Dorsolateral prefrontal cortex (tissue), 120 donors: ENCODE measurements at regions of chr2 and their contacts with region 1.

Region 1: DNA sequence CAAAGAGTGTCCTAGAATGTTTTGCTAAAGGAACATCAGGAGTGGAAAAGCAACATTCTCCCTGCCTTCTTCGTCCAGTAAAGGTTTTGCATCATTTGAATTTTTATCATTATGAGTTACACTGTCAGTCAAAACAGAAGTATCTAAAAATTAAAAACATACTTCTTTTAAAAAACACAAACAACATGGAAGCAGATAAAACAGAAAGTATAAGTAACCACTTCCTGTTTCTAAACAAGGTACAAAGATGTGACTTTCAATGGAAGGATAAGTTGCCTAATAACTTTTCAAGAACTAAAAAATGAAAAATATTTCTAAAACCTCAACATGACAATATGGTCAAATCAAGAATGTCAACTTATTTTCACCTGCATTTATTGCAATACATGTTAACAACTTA is 158.2 kb downstream of the STK39 start:
- DNase-seq: no peak
- H3K4me3 ChIP-seq: no peak overlapping the region
- H3K27ac ChIP-seq: peak overlapping the region in 6 of 59 donors; percentile 3 to 39 (median 22)
- H3K27me3 ChIP-seq: no peaks in the 10 kb centered on the region
- CTCF ChIP-seq: no peak

Region 2: DNA sequence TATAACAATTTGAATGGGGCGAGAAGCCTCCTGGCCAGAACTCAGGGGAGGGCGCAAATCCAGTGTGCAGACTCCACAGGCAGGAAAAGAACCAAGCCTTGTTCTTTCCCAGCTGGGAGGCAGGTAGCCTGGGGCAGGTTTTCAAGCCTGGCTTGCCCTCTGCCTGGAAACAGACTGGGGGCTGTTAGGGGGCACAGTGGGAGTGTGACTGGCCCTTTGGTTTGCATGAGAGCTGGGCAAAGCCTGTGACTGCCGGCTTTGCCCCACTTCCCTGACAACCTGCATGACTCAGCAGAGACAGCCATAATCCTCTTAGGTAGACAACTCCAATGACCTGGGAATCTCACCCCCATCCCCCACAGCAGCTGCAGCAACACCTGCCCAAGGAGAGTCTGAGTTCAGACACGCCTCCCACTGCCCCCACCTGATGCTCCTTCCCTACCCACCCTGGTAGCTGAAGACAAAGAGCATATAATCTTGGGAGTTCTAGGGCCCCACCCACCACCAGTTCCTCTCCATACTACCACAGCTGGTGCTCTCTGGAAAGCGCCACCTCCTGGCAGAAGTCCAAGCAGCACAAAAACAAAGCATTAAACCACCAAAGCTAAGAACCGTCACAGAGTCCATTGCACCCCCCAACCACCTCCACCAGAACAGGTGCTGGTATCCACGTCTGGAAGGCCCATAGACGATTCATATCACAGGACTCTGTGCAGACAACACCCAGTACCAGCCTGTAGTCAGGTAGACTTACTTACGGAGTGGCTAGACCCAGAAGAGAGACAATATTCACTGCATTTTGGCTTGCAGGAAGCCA is 244.3 kb before region 1 on chr2:
- intact Hi-C with region 1: no loop called
- DNase-seq: no peak
- H3K4me3 ChIP-seq: no peak overlapping the region
- H3K27ac ChIP-seq: no peak overlapping the region
- H3K27me3 ChIP-seq: no peaks in the 10 kb centered on the region
- CTCF ChIP-seq: no peak

Region 3: DNA sequence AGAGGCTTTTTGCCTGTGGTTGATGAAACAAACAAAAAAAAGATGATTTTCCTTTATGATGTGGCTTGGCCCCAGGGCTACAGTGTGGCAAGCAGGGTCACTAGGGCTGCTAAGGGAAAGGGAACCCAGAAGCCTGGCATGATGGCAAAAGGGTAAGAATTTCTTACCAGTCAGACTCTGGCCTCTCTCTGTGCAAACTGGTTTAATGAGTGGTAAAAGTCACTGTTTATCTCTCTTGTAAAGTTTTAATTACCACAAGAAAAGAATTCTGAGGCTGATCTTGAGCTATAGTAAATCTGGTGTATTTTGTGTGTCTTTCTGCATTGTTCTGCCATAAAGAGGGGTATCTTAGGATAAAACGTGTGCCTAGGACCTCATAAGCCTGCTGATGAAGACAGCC is 117.2 kb before region 1 on chr2:
- intact Hi-C with region 1: loop called in 1 of 2 experiments (anchors 10 kb)
- DNase-seq: no peak
- H3K4me3 ChIP-seq: no peak overlapping the region
- H3K27ac ChIP-seq: no peak overlapping the region
- H3K27me3 ChIP-seq: no peaks in the 10 kb centered on the region
- CTCF ChIP-seq: no peak

Region 4: GRCh38 chr2:168432565-168433186 is 343.5 kb after region 1 on chr2:
- intact Hi-C with region 1: no loop called
- DNase-seq: no peak
- H3K4me3 ChIP-seq: no peak overlapping the region
- H3K27ac ChIP-seq: no peak overlapping the region
- H3K27me3 ChIP-seq: no peaks in the 10 kb centered on the region
- CTCF ChIP-seq: no peak